ENCODE measurements at regions of chr17 and their contacts with region 1.

Region 1: GRCh38 chr17:36722121-36722902 is 120.9 kb downstream of the MRM1 start:
- DNase-seq: peak; percentile 68 to 91 (median 84)
- ATAC-seq: peak; percentile 97
- H3K4me3 ChIP-seq: peak overlapping the region; percentile 72
- H3K4me3 Mint-ChIP-seq: peak overlapping the region; percentile 67 to 90 (median 86)
- H3K27ac ChIP-seq: peak overlapping the region; percentile 80
- H3K27ac Mint-ChIP-seq: peak overlapping the region; percentile 90 to 99 (median 98)
- H3K4me1 ChIP-seq: peaks cover 21 to 49% of the 10 kb centered on the region in 2 donors
- H3K4me1 Mint-ChIP-seq: peaks cover 32 to 64% (median 58%) of the 10 kb centered on the region in 7 donors
- H3K27me3 ChIP-seq: no peaks in the 10 kb centered on the region
- H3K27me3 Mint-ChIP-seq: no peaks in the 10 kb centered on the region

Region 2: GRCh38 chr17:36534840-36535668 is 187.3 kb before region 1 on chr17 and contains the starts of genes MYO19 and PIGW:
- CTCF ChIA-PET with region 1: no interaction called
- POLR2A ChIA-PET with region 1: no interaction called
- intact Hi-C with region 1: loop called in 1 of 2 experiments (anchors 5 kb)
- DNase-seq: peak; percentile 74 to 90 (median 81)
- ATAC-seq: peak; percentile 88
- H3K4me3 ChIP-seq: peak within 1 kb of the TSS; percentile 100
- H3K4me3 Mint-ChIP-seq: peak within 1 kb of the TSS; percentile 93 to 100 (median 98)
- H3K27ac ChIP-seq: peak within 1 kb of the TSS; percentile 97
- H3K27ac Mint-ChIP-seq: peak within 1 kb of the TSS; percentile 94 to 99 (median 97)
- H3K4me1 ChIP-seq: peaks cover 6% of the 10 kb centered on the region in 2 donors
- H3K4me1 Mint-ChIP-seq: peaks cover 5 to 38% (median 12%) of the 10 kb centered on the region in 7 donors
- H3K27me3 ChIP-seq: no peaks in the 10 kb centered on the region
- H3K27me3 Mint-ChIP-seq: no peaks in the 10 kb centered on the region
- total RNA-seq, gene MYO19: 65.2 to 114 (median 76.9) TPM
- total RNA-seq, gene PIGW: 4.2 to 15.6 (median 5.4) TPM

Region 3: DNA sequence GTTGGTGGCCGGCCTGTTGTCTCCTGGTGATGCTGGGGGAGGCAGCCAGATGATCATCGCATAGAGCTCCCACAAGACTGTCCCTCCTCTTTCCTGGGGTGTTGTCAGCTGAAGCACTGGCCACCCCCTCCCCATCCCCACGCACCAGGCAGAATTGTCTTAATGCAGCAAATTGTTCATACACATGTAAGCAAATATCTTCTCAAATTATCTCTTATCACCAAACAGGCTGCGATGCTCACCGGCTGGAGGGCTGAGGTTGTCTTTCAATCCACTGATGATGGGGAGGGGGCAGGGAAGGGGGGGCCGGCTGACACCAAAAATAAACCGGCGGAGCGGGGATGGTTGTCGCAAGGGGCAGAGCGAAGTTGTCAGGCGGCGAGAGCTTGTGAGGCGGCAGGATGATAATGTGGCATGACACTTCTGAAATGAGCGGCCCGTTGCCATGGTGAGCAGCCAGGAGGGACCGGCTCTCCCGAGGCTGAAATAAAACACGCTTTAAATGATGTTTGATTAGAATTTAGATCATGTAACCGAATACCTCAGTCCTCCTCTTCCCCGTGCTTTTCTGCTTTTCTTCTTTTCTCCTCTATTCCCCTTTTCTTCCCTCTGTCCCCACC is 61.2 kb before region 1 on chr17:
- CTCF ChIA-PET with region 1: no interaction called
- POLR2A ChIA-PET with region 1: no interaction called
- intact Hi-C with region 1: no loop called
- DNase-seq: no peak
- ATAC-seq: no peak
- H3K4me3 ChIP-seq: no peak overlapping the region
- H3K4me3 Mint-ChIP-seq: no peak overlapping the region
- H3K27ac ChIP-seq: no peak overlapping the region
- H3K27ac Mint-ChIP-seq: no peak overlapping the region
- H3K4me1 ChIP-seq: no peaks in the 10 kb centered on the region
- H3K4me1 Mint-ChIP-seq: peaks cover 7 to 12% (median 10%) of the 10 kb centered on the region in 7 donors
- H3K27me3 ChIP-seq: no peaks in the 10 kb centered on the region
- H3K27me3 Mint-ChIP-seq: peaks cover 21 to 56% (median 39%) of the 10 kb centered on the region in 5 donors

Region 4: GRCh38 chr17:36675250-36675649 is 47.1 kb before region 1 on chr17:
- CTCF ChIA-PET with region 1: no interaction called
- POLR2A ChIA-PET with region 1: interaction called, 3 read pairs
- intact Hi-C with region 1: loop called in 1 of 2 experiments (anchors 1 kb)
- DNase-seq: peak in 1 of 9 donors; percentile 50
- ATAC-seq: peak; percentile 47
- H3K4me3 ChIP-seq: no peak overlapping the region
- H3K4me3 Mint-ChIP-seq: peak overlapping the region in 6 of 10 donors; percentile 38 to 81 (median 54)
- H3K27ac ChIP-seq: no peak overlapping the region
- H3K27ac Mint-ChIP-seq: peak overlapping the region in 6 of 9 donors; percentile 64 to 94 (median 76)
- H3K4me1 ChIP-seq: peaks cover 23 to 24% of the 10 kb centered on the region in 2 donors
- H3K4me1 Mint-ChIP-seq: peaks cover 30 to 60% (median 44%) of the 10 kb centered on the region in 7 donors
- H3K27me3 ChIP-seq: no peaks in the 10 kb centered on the region
- H3K27me3 Mint-ChIP-seq: peaks cover 0 to 5% (median 0%) of the 10 kb centered on the region in 5 donors

Region 5: DNA sequence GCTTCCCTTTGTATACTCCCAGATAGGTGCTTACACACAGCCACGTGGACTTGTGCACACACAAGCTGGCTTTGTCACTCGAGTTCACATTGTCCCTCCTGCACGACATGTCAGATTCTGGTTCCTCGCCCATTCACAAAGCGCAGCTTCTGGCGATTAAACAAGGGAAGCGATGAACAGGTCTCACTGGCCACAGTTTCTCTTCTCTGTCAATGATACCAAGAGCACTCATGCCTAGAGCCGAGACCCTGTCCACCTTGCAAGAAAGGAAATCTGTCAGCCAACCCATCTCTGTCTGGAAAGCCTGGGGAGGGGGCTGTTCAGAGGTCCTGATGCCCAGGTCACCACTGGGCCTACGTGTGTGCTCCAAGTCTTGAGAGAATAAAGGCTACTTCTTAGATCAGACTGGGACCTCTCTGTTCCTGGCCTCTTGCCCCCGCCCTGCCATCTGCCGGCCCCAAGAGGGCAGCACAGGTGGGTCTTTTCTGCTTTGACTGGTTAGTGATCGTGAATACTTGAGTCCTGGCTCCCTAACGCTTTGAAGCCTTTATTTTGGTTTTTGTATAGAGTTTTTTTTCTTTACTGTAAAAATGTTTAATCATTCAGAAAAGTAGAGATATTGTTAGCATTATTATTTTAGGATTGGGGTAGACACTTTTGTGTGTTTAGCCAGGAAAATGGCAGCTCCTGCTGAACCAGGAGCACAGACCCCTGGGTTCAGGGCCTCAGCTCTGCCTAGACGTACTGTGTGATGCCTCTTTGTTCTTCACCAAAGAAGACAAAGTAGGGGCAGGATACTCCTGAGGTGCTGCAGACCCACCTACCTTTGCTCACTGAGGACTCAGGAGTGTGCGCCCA is 16.2 kb before region 1 on chr17:
- CTCF ChIA-PET with region 1: interaction called, 3 read pairs
- POLR2A ChIA-PET with region 1: interaction called, 4 read pairs
- intact Hi-C with region 1: loop called in 1 of 2 experiments (anchors 1 kb)
- DNase-seq: peak in 6 of 9 donors; percentile 26 to 47 (median 40)
- ATAC-seq: peak; percentile 74
- H3K4me3 ChIP-seq: no peak overlapping the region
- H3K4me3 Mint-ChIP-seq: no peak overlapping the region
- H3K27ac ChIP-seq: no peak overlapping the region
- H3K27ac Mint-ChIP-seq: no peak overlapping the region
- H3K4me1 ChIP-seq: no peaks in the 10 kb centered on the region
- H3K4me1 Mint-ChIP-seq: peaks cover 0 to 5% (median 0%) of the 10 kb centered on the region in 7 donors
- H3K27me3 ChIP-seq: peaks cover 0 to 5% of the 10 kb centered on the region in 2 donors
- H3K27me3 Mint-ChIP-seq: peaks cover 29 to 43% (median 39%) of the 10 kb centered on the region in 5 donors

Region 6: DNA sequence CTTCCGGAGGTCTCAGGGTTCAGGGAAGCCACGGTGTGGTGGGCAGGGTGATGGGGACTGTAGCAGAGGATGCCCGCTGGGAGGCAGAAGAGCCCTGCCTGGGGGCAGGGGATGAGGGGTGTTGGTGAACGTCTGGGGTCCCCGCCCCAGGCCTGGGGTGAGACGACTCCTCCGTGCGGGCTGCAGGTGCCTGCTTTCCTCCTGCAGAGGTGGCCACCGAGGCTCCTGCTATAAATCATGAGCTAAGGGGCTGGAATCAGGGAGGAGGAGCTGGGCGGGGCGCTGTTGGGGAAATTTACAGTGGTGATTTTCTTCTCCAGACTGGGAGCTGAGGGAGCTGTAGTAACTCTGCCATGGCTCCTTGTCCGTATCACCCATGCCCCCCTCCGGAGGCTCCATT is 46.1 kb after region 1 on chr17:
- CTCF ChIA-PET with region 1: interaction called, 3 read pairs
- POLR2A ChIA-PET with region 1: interaction called, 6 read pairs
- intact Hi-C with region 1: loop called in 1 of 2 experiments (anchors 2 kb)
- DNase-seq: no peak
- ATAC-seq: no peak
- H3K4me3 ChIP-seq: no peak overlapping the region
- H3K4me3 Mint-ChIP-seq: no peak overlapping the region
- H3K27ac ChIP-seq: no peak overlapping the region
- H3K27ac Mint-ChIP-seq: no peak overlapping the region
- H3K4me1 ChIP-seq: peaks cover 0 to 5% of the 10 kb centered on the region in 2 donors
- H3K4me1 Mint-ChIP-seq: peaks cover 4 to 11% (median 4%) of the 10 kb centered on the region in 7 donors
- H3K27me3 ChIP-seq: no peaks in the 10 kb centered on the region
- H3K27me3 Mint-ChIP-seq: peaks cover 0 to 21% (median 0%) of the 10 kb centered on the region in 5 donors

Region 7: DNA sequence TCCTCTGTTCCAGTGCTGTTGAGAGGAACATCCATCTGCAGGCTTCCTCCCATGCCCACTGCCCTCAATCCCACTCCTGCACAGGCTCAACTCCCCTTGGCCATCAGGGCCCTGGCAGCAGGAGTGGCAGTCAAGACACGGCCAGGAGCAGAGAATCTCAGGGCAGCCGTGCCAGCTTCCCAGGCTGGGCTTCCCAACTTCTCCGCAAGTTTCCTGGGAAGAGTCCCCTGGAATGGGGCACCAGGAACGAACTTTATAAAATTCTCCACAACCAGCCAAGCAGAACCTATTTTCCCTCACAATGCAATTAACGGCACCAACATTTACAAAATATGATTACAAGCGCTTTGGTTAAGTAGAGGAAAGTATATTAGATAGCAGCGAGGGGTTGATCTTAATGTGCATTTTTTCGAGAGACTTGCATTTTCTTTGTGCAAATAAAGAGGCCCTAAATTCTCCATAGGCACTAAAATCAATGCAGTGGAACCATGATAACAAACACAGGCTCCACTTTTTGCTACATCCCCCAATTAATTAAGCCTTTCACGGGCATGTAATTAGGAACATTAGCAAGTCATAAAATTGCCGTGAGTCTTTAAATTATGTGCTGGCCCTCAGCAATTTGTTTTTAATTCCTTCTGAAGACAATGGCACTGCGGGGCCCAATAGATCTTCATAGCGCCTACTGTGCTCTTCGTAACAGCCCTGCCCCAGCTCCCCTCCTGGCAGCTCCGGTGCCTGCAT is 115.1 kb after region 1 on chr17:
- CTCF ChIA-PET with region 1: no interaction called
- POLR2A ChIA-PET with region 1: no interaction called
- intact Hi-C with region 1: no loop called
- DNase-seq: no peak
- ATAC-seq: no peak
- H3K4me3 ChIP-seq: no peak overlapping the region
- H3K4me3 Mint-ChIP-seq: no peak overlapping the region
- H3K27ac ChIP-seq: no peak overlapping the region
- H3K27ac Mint-ChIP-seq: no peak overlapping the region
- H3K4me1 ChIP-seq: no peaks in the 10 kb centered on the region
- H3K4me1 Mint-ChIP-seq: peaks cover 0 to 3% (median 0%) of the 10 kb centered on the region in 7 donors
- H3K27me3 ChIP-seq: no peaks in the 10 kb centered on the region
- H3K27me3 Mint-ChIP-seq: peaks cover 0 to 14% (median 4%) of the 10 kb centered on the region in 5 donors

Region 8: GRCh38 chr17:36948717-36949460 is 226.6 kb after region 1 on chr17 and contains the start of gene AATF:
- CTCF ChIA-PET with region 1: no interaction called
- POLR2A ChIA-PET with region 1: interaction called, 5 read pairs
- intact Hi-C with region 1: loop called (anchors 1 to 5 kb)
- DNase-seq: peak; percentile 93 to 99 (median 97)
- ATAC-seq: peak; percentile 99
- H3K4me3 ChIP-seq: peak within 1 kb of the TSS; percentile 69
- H3K4me3 Mint-ChIP-seq: peak within 1 kb of the TSS; percentile 91 to 99 (median 95)
- H3K27ac ChIP-seq: peak within 1 kb of the TSS; percentile 85
- H3K27ac Mint-ChIP-seq: peak within 1 kb of the TSS; percentile 91 to 97 (median 94)
- H3K4me1 ChIP-seq: peaks cover 21 to 33% of the 10 kb centered on the region in 2 donors
- H3K4me1 Mint-ChIP-seq: peaks cover 43 to 60% (median 51%) of the 10 kb centered on the region in 7 donors
- H3K27me3 ChIP-seq: peaks cover 7 to 18% of the 10 kb centered on the region in 2 donors
- H3K27me3 Mint-ChIP-seq: peaks cover 26 to 45% (median 34%) of the 10 kb centered on the region in 5 donors
- total RNA-seq, gene AATF: 39.7 to 70.8 (median 58.7) TPM

Region 9: GRCh38 chr17:37489197-37490001 is 767.1 kb after region 1 on chr17 and contains the start of gene DUSP14:
- CTCF ChIA-PET with region 1: no interaction called
- POLR2A ChIA-PET with region 1: no interaction called
- intact Hi-C with region 1: loop called in 1 of 2 experiments (anchors 5 kb)
- DNase-seq: peak; percentile 72 to 86 (median 84)
- ATAC-seq: peak; percentile 88
- H3K4me3 ChIP-seq: peak within 1 kb of the TSS; percentile 67
- H3K4me3 Mint-ChIP-seq: peak within 1 kb of the TSS; percentile 91 to 98 (median 95)
- H3K27ac ChIP-seq: peak within 1 kb of the TSS; percentile 79
- H3K27ac Mint-ChIP-seq: peak within 1 kb of the TSS; percentile 81 to 95 (median 88)
- H3K4me1 ChIP-seq: peaks cover 19 to 20% of the 10 kb centered on the region in 2 donors
- H3K4me1 Mint-ChIP-seq: peaks cover 20 to 39% (median 27%) of the 10 kb centered on the region in 7 donors
- H3K27me3 ChIP-seq: no peaks in the 10 kb centered on the region
- H3K27me3 Mint-ChIP-seq: peaks cover 0 to 3% (median 0%) of the 10 kb centered on the region in 5 donors
- total RNA-seq, gene DUSP14: 4.3 to 11.7 (median 8.7) TPM

Measured in naive thymus-derived CD4-positive, alpha-beta T cell (primary cell).